Transverse colon (tissue), 4 donors: ENCODE measurements at regions of chr5 and their contacts with region 1.

Region 1: GRCh38 chr5:151432210-151432609 is 15.2 kb upstream of the SLC36A1 start:
- DNase-seq: no peak
- H3K4me3 ChIP-seq: no peak overlapping the region
- H3K27ac ChIP-seq: no peak overlapping the region
- H3K4me1 ChIP-seq: no peaks in the 10 kb centered on the region
- H3K27me3 ChIP-seq: no peaks in the 10 kb centered on the region
- CTCF ChIP-seq: no peak
- EP300 ChIP-seq: no peak
- POLR2A ChIP-seq: no peak

Region 2: GRCh38 chr5:151213800-151214613 is 218.2 kb before region 1 on chr5:
- in situ Hi-C with region 1: no loop called
- intact Hi-C with region 1: no loop called
- DNase-seq: peak; percentile 86
- H3K4me3 ChIP-seq: peak overlapping the region in 1 of 4 donors; percentile 15
- H3K27ac ChIP-seq: peak overlapping the region; percentile 78 to 87 (median 80)
- H3K4me1 ChIP-seq: peaks cover 17 to 58% (median 43%) of the 10 kb centered on the region in 4 donors
- H3K27me3 ChIP-seq: no peaks in the 10 kb centered on the region
- CTCF ChIP-seq: no peak
- EP300 ChIP-seq: no peak
- POLR2A ChIP-seq: peak; percentile 28

Region 3: DNA sequence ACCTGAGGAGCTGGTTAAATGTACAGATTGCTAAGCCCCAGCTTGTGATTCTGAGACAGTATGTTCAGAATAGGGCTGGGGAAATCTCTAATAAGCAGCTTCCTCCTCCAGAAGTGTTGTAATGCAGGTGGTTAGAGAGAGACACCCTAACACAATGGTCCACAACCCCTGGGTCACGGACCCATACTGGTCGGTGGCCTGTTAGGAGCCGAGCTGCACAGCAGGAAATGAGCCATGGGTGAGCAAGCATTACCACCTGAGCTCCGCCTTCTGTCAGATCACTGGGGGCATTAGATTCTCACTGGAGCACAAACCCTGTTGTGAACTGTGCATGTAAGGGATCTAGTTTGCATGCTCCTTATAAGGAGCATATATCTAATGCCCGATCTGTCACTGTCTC is 77.0 kb after region 1 on chr5:
- in situ Hi-C with region 1: loop called in 1 of 4 experiments (anchors 10 kb)
- intact Hi-C with region 1: no loop called
- DNase-seq: no peak
- H3K4me3 ChIP-seq: no peak overlapping the region
- H3K27ac ChIP-seq: no peak overlapping the region
- H3K4me1 ChIP-seq: no peaks in the 10 kb centered on the region
- H3K27me3 ChIP-seq: no peaks in the 10 kb centered on the region
- CTCF ChIP-seq: no peak
- EP300 ChIP-seq: no peak
- POLR2A ChIP-seq: no peak

Region 4: GRCh38 chr5:151647320-151647861 is 215.2 kb after region 1 on chr5:
- in situ Hi-C with region 1: loop called in 1 of 4 experiments (anchors 10 kb)
- intact Hi-C with region 1: no loop called
- DNase-seq: no peak
- H3K4me3 ChIP-seq: no peak overlapping the region
- H3K27ac ChIP-seq: no peak overlapping the region
- H3K4me1 ChIP-seq: no peaks in the 10 kb centered on the region
- H3K27me3 ChIP-seq: no peaks in the 10 kb centered on the region
- CTCF ChIP-seq: no peak
- EP300 ChIP-seq: no peak
- POLR2A ChIP-seq: no peak

Region 5: GRCh38 chr5:152259702-152260101 is 827.5 kb after region 1 on chr5:
- in situ Hi-C with region 1: no loop called
- intact Hi-C with region 1: no loop called
- DNase-seq: no peak
- H3K4me3 ChIP-seq: no peak overlapping the region
- H3K27ac ChIP-seq: no peak overlapping the region
- H3K4me1 ChIP-seq: no peaks in the 10 kb centered on the region
- H3K27me3 ChIP-seq: no peaks in the 10 kb centered on the region
- CTCF ChIP-seq: no peak
- EP300 ChIP-seq: no peak
- POLR2A ChIP-seq: no peak

Region 6: GRCh38 chr5:152593407-152593932 is 1161.3 kb after region 1 on chr5:
- in situ Hi-C with region 1: no loop called
- intact Hi-C with region 1: no loop called
- DNase-seq: no peak
- H3K4me3 ChIP-seq: no peak overlapping the region
- H3K27ac ChIP-seq: no peak overlapping the region
- H3K4me1 ChIP-seq: no peaks in the 10 kb centered on the region
- H3K27me3 ChIP-seq: no peaks in the 10 kb centered on the region
- CTCF ChIP-seq: no peak
- EP300 ChIP-seq: no peak
- POLR2A ChIP-seq: no peak